Activated CD8-positive, alpha-beta memory T cell treated with anti-CD3 and anti-CD28 coated beads, Interleukin-2, amount 10 ng/mL, durations not matched to agents 7 days and 5 days (primary cell): ENCODE measurements at regions of chr9 and their contacts with region 1.

Region 1: DNA sequence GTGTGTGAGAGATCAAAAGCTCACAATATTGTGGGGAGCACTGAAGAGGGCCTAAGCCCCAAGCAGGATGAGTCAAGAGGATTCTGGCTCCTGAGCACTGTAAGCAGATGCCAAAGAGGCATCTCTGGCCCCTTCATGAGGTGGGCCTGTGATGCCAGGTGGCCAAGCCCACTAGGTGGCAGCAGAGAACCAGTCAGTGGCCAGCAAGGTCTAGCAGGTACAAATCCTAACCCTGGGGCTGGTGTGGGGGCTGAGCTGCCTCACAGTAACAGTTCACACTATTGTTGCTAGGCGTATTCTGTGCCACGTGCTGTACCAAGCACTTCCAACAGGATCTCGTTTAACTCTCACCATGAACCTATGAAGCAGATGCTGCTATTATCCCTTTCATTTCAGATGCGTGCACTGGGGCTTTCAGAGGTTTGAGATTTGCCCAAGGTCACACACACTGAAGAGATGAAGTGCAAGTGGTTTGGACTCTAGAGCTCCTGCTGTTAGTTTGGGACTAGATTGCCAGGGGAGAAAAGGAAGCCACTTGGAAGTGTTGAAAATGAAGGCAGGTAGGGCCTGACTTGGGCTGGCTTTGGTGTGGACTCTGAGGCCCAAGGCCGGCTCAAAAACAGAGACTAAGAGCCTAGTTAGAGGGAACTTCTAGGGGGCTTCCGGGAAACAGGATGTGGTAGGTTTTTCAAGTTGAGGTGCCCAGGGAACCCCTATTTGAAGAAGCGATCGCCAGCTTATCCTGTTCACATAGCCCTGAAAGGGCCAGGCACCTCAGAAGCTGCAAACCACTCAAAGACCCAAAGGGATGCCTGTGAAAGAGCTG is 4.4 kb upstream of the MLANA start:
- DNase-seq: peak; percentile 90
- ATAC-seq: peak; percentile 99
- H3K4me3 Mint-ChIP-seq: no peak overlapping the region
- H3K27ac Mint-ChIP-seq: peak overlapping the region; percentile 55
- H3K4me1 Mint-ChIP-seq: peaks cover 9% of the 10 kb centered on the region
- H3K27me3 Mint-ChIP-seq: peaks cover 8% of the 10 kb centered on the region

Region 2: DNA sequence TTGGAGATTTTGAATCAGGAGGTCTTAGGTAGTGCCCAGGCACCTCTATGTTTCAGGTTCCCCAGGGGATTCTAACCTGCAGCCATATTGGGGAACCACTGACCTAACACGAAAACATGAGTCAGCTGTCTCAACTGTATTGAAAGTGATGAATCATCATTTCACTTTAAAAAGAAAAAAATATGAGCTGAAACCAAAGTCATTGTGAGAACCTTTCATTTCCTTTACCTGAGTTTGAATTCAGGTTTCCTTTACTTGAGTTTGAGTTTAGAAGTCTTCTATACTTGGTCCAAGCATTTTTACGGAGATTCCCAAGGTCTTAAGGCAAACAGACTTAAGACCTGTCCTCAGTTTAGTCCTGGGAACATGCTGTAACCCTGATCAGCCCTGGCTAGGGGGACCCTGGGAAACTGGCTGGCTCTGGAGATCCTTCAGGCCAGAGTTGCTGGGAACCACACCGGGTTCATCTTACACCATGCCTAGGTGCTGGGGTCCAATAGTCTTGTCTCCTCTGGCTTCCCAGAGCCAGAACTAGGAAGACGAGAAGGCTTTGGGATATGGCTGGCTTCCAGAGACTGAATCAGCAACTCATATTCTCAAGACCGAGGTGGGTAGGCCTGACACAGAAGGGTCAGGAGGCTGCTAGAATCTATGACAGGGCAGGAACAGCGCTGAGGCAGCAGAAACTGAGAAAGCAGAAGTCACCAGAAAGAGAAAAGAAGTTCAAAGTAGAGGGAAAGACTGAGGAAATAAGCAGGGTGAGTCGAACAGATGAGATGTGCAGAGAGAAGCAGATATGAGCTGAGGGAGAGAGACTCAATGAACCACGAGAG is 392.4 kb before region 1 on chr9:
- CTCF ChIA-PET with region 1: no interaction called
- DNase-seq: peak; percentile 60
- ATAC-seq: peak; percentile 82
- H3K4me3 Mint-ChIP-seq: peak overlapping the region; percentile 4
- H3K27ac Mint-ChIP-seq: peak overlapping the region; percentile 76
- H3K4me1 Mint-ChIP-seq: peaks cover 22% of the 10 kb centered on the region
- H3K27me3 Mint-ChIP-seq: no peaks in the 10 kb centered on the region

Region 3: GRCh38 chr9:5773324-5773999 is 112.9 kb before region 1 on chr9:
- CTCF ChIA-PET with region 1: no interaction called
- DNase-seq: no peak
- ATAC-seq: no peak
- H3K4me3 Mint-ChIP-seq: no peak overlapping the region
- H3K27ac Mint-ChIP-seq: no peak overlapping the region
- H3K4me1 Mint-ChIP-seq: peaks cover 3% of the 10 kb centered on the region
- H3K27me3 Mint-ChIP-seq: no peaks in the 10 kb centered on the region

Region 4: GRCh38 chr9:5790923-5791322 is 95.4 kb before region 1 on chr9:
- CTCF ChIA-PET with region 1: no interaction called
- DNase-seq: no peak
- ATAC-seq: no peak
- H3K4me3 Mint-ChIP-seq: no peak overlapping the region
- H3K27ac Mint-ChIP-seq: no peak overlapping the region
- H3K4me1 Mint-ChIP-seq: peaks cover 25% of the 10 kb centered on the region
- H3K27me3 Mint-ChIP-seq: no peaks in the 10 kb centered on the region

Region 5: GRCh38 chr9:5851445-5851844 is 34.9 kb before region 1 on chr9:
- CTCF ChIA-PET with region 1: interaction called, 10 read pairs
- DNase-seq: peak; percentile 81
- ATAC-seq: peak; percentile 99
- H3K4me3 Mint-ChIP-seq: peak overlapping the region; percentile 23
- H3K27ac Mint-ChIP-seq: peak overlapping the region; percentile 84
- H3K4me1 Mint-ChIP-seq: peaks cover 71% of the 10 kb centered on the region
- H3K27me3 Mint-ChIP-seq: no peaks in the 10 kb centered on the region

Region 6: GRCh38 chr9:5899292-5899691 is 13.0 kb after region 1 on chr9:
- CTCF ChIA-PET with region 1: interaction called, 24 read pairs
- DNase-seq: no peak
- ATAC-seq: no peak
- H3K4me3 Mint-ChIP-seq: no peak overlapping the region
- H3K27ac Mint-ChIP-seq: no peak overlapping the region
- H3K4me1 Mint-ChIP-seq: no peaks in the 10 kb centered on the region
- H3K27me3 Mint-ChIP-seq: no peaks in the 10 kb centered on the region

Region 7: DNA sequence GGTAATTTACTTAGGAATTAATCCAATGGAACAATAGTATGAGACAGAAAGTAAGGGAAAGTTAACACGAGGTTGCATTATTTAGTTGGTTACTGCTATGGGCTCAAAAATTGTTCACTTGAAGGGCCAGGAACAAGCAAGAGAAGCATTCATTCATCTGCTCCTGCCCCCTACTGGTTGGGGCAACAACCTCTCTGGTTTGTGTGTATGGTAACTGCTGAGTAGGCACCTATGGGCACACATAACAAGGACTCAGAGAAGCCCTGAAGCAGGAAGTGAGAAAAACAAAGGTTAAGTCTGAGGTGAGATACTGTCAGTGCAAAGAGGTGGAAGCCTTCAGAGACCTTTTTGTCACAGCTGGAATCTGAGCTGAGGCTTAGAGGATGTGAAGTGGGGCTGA is 163.5 kb after region 1 on chr9:
- CTCF ChIA-PET with region 1: interaction called, 47 read pairs
- DNase-seq: peak; percentile 71
- ATAC-seq: peak; percentile 87
- H3K4me3 Mint-ChIP-seq: no peak overlapping the region
- H3K27ac Mint-ChIP-seq: no peak overlapping the region
- H3K4me1 Mint-ChIP-seq: peaks cover 10% of the 10 kb centered on the region
- H3K27me3 Mint-ChIP-seq: peaks cover 9% of the 10 kb centered on the region

Region 8: DNA sequence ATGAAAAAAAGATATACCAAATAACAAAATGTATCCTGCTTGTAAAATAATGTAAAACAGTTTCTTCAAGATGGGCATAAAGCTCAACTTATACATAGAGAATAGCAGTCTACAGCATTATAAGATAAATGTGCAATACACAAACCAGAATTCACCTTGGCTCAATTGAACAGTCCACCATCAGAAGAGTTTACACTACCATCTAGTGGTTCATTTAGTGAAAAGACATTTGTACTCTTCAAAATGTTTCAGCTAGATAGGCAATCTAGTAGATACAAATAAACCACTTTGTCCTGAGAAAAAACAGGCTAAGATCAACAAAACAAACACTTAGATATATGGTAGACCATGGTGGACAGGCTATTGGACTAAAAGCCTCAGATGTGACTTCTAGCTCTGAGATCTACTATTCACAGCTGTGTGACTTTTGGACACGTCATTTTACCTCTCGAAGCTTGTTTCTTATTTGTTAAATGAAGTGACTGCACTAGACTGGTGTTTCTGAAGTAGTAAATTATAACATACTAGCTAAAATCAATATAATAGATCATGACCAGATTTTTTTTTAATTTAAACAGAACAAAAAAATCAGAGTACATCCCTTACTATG is 419.7 kb after region 1 on chr9:
- CTCF ChIA-PET with region 1: interaction called, 12 read pairs
- DNase-seq: no peak
- ATAC-seq: no peak
- H3K4me3 Mint-ChIP-seq: no peak overlapping the region
- H3K27ac Mint-ChIP-seq: no peak overlapping the region
- H3K4me1 Mint-ChIP-seq: no peaks in the 10 kb centered on the region
- H3K27me3 Mint-ChIP-seq: peaks cover 35% of the 10 kb centered on the region